ENCODE measurements at regions of chr19 and their contacts with region 1.

Region 1: DNA sequence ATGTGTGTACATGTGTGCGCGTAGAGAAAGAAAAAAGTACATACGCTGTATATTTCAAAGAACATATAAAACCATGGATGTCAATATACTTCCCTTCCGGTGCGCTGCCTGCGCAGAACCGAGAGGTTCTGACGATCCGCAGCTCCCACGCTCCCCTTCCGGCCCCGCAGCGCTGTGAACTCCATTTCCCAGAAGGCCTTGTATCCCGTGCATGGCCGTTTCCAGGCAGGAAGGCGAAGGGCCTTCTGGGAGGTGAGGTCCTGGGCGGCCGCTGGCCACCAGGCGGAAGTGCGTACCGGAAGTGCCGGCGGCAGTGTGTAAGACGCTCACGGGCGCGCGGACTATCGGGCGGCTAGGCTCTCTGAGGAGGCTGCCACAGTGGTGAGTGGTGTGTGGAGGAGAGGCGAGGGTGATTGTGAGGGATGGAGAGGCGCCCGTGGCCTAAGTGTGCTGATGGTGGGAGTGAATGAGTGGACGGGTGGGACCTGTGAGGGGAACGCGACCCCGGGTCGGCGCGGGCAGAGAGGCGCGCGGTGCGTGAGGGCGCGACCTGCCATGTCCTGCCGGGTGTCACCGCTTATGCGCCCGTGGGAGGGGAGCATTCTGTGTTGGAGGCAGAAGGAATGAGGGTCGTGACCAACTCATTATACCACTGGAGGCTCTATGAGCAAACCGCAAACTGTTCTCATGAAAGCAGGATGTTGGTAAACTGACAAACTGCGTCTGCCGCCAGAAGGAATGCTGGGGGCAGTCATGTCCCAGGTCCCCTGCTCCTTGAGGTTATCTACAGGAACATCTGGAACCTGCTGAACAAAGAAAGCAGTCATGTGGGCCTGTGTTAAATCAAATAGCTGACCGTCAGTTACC is at the start of gene ERVK3-1:
- DNase-seq: peak; percentile 97
- H3K4me3 Mint-ChIP-seq: peak within 1 kb of the TSS; percentile 89
- H3K27ac Mint-ChIP-seq: peak within 1 kb of the TSS; percentile 92
- H3K4me1 Mint-ChIP-seq: peaks cover 42% of the 10 kb centered on the region
- H3K27me3 Mint-ChIP-seq: no peaks in the 10 kb centered on the region
- total RNA-seq, gene ERVK3-1: 37.1 to 42.3 TPM

Region 2: DNA sequence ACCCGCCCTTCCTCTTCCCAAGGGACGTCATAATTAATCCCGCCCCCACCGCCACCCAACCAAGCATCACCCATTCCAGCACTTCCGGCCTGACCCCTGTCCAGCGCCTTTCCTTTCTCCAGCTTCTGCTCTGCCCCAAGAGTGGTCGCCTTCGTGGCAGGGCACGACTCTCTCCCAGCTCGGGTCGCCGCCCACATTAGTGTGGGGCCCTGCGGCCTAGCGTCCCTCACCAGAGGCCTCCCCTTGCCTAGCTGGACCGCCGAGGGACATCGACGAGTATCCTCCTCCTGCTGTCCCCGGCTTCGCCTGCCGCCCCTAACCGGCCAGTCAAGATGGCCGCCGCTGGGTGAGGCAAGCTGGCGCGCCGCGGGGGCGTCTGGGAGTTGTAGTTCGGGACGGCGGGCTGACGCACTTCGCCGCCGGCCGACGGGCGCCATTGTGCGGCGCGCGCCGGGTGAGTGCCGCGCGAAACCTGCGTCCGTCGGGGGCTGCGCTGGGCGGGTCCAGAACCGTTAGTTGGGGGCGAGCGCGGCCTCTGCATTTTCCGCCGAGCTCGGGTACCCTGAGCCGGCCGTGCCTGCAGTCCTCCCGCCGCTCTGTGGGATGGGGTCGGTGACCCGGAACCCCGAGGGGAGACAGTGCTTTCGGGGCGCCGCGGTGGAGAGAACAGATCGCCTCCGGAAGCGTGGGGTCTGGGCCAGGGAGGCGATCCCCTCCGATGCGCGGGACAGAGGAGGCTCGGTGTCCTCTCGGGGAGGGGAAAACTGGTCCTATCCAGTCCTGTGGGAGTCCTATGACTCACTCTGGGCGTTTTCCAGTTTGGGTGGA is 122.1 kb before region 1 on chr19 and contains the start of gene ZNF274:
- CTCF ChIA-PET with region 1: no interaction called
- POLR2A ChIA-PET with region 1: no interaction called
- intact Hi-C with region 1: loop called (anchors 1 kb)
- DNase-seq: peak; percentile 95
- H3K4me3 Mint-ChIP-seq: peak within 1 kb of the TSS; percentile 92
- H3K27ac Mint-ChIP-seq: peak within 1 kb of the TSS; percentile 99
- H3K4me1 Mint-ChIP-seq: peaks cover 16% of the 10 kb centered on the region
- H3K27me3 Mint-ChIP-seq: no peaks in the 10 kb centered on the region
- total RNA-seq, gene ZNF274: 19.1 to 19.6 TPM

Region 3: GRCh38 chr19:58203814-58204475 is 101.4 kb before region 1 on chr19:
- CTCF ChIA-PET with region 1: no interaction called
- POLR2A ChIA-PET with region 1: no interaction called
- intact Hi-C with region 1: no loop called
- DNase-seq: no peak
- H3K4me3 Mint-ChIP-seq: no peak overlapping the region
- H3K27ac Mint-ChIP-seq: no peak overlapping the region
- H3K4me1 Mint-ChIP-seq: no peaks in the 10 kb centered on the region
- H3K27me3 Mint-ChIP-seq: no peaks in the 10 kb centered on the region

Region 4: DNA sequence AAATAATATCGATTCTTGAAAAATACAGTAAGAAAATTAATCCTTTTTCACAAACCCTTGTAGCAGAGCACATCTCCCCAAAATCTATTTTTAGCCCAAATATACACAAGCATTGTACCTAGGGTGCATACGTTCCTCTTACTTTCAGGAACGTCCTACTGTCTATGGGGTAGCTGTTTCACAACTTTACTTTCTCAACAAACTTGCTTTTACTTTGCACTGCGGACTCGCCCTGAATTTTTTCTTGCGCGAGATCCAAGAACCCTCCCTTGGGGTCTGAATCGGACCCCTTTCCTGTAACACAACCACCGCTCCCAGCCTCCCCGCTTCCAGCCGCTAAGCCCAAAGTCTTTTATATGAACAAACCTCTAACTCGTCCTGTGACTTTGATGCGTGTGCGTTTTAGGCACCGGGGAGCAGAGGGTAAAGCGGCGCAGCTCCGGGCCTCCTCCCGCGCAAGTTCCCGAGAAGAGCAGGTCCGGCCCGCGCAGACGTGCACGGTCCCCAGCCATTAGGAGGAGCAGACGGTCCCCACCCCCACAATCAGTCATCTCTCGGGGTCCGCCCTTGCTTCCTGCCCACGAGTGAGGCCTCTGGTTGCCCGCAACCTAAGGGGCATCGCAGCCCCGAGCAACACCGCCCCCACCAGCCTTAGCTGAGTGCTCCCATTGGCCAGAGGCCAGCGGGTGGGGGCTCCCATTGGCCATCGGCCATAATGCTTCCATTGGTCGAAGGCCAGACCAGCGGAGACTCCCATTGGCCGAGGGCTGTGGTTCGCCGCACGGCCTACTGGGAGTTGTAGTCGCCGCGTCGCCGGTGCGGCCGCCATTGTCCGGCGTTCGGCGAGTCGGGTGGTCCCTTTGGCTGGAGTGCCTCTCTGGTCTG is 26.9 kb before region 1 on chr19 and contains the start of gene ZNF8:
- CTCF ChIA-PET with region 1: interaction called, 3 read pairs
- POLR2A ChIA-PET with region 1: no interaction called
- intact Hi-C with region 1: loop called (anchors 1 kb)
- DNase-seq: peak; percentile 99
- H3K4me3 Mint-ChIP-seq: peak within 1 kb of the TSS; percentile 83
- H3K27ac Mint-ChIP-seq: peak within 1 kb of the TSS; percentile 95
- H3K4me1 Mint-ChIP-seq: peaks cover 35% of the 10 kb centered on the region
- H3K27me3 Mint-ChIP-seq: no peaks in the 10 kb centered on the region
- total RNA-seq, gene ZNF8: 3.7 to 3.9 TPM

Region 5: GRCh38 chr19:58294743-58295374 is 10.4 kb before region 1 on chr19:
- CTCF ChIA-PET with region 1: no interaction called
- POLR2A ChIA-PET with region 1: no interaction called
- intact Hi-C with region 1: no loop called
- DNase-seq: no peak
- H3K4me3 Mint-ChIP-seq: no peak overlapping the region
- H3K27ac Mint-ChIP-seq: no peak overlapping the region
- H3K4me1 Mint-ChIP-seq: no peaks in the 10 kb centered on the region
- H3K27me3 Mint-ChIP-seq: no peaks in the 10 kb centered on the region

Region 6: GRCh38 chr19:58362272-58362994 is 57.1 kb after region 1 on chr19 and contains the start of gene ZNF497:
- CTCF ChIA-PET with region 1: no interaction called
- POLR2A ChIA-PET with region 1: interaction called, 6 read pairs
- intact Hi-C with region 1: loop called (anchors 1 kb)
- DNase-seq: peak; percentile 98
- H3K4me3 Mint-ChIP-seq: peak within 1 kb of the TSS; percentile 94
- H3K27ac Mint-ChIP-seq: peak within 1 kb of the TSS; percentile 89
- H3K4me1 Mint-ChIP-seq: peaks cover 8% of the 10 kb centered on the region
- H3K27me3 Mint-ChIP-seq: no peaks in the 10 kb centered on the region
- total RNA-seq, gene ZNF497: 0.31 to 0.93 TPM

Region 7: DNA sequence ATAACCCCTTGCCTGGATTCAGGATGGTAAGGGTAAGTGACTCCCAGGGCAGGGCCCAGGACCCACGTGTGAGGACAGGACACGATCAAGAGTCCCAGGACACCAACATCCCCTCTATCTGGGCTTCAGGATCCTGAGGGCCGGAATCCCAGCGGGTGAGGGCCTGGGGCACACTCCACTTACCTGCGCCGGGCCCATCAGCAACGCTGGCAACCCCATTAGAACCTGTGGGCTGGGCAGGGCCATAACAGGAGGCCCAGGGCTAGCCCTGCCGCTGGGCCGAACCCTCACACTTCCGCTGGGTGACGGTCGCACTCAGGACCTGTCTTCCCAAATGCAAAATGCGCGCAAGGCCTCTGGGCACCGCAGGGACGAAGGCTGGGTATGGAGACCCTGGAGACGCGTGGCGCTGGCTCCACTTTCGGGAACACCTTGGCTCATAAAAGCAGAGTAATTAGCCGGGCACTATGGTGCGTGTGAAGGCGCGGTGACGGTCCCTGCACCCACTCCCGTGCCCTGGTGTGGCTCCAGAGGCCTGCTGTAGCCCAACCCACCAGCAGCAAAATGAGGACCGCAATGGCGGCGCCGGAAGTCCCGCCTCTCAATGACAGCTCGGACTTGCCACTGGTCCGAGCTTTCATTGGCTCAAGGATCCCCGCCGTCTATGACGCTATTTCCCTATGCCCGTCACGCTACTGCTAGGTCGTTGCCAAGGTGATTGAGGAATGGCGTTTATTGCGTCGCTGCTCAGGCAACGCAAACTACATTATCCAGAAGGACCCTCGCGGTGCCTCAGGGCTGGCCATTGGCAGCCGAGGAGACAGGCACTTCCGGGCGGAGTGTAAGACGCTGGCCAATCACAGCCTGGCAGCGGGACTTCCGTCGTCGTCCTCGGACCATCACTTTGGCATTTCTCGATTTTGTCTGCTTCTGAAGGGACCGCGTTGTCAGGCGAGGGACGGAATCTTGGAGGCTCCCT is 134.6 kb after region 1 on chr19 and contains the start of gene ZNF132:
- CTCF ChIA-PET with region 1: interaction called, 3 read pairs
- POLR2A ChIA-PET with region 1: no interaction called
- intact Hi-C with region 1: loop called (anchors 1 kb)
- DNase-seq: peak; percentile 97
- H3K4me3 Mint-ChIP-seq: peak within 1 kb of the TSS; percentile 84
- H3K27ac Mint-ChIP-seq: peak within 1 kb of the TSS; percentile 71
- H3K4me1 Mint-ChIP-seq: peaks cover 25% of the 10 kb centered on the region
- H3K27me3 Mint-ChIP-seq: no peaks in the 10 kb centered on the region
- total RNA-seq, gene ZNF132: 3.1 to 3.6 TPM

Region 8: DNA sequence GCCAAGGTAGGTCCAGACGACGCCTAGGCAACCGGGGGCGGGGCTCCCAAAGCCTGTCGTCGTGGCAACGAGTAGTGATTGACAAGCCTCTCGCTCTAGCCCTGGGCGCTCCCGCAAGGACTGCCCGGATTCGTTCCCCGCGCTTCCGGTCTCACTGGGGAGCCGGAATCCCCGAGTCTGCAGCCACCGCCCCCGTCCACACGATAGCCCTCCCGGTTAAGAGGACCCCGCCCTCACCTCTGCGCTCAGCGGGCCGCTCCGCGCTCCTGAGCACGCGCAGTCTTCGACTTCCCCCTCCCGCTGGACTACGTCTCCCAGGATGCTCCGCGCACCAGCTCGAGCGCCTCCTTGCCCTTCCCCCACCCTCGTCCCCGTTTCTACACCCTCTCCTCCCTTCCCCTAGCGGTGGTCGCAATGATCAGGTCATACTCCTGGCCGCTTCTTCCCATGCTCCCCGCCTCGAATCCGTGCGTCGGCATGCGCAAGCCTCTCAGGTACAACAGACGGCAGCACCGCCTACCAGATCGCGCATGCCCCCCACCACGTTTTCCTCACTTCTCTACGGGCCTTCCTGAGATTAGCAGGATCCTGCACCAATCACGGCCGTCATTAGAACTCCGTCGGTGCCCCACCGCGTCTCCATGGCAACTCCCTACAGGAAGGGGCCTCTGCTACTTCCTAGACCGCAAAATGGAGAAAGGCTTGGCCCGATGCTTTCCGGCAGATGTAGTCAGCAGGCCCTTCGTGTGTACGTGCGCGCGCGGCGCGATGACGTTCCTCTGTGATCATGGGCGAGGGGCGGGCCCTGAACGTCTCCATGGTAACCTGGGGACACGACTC is 267.7 kb after region 1 on chr19 and contains the start of gene MZF1:
- CTCF ChIA-PET with region 1: no interaction called
- POLR2A ChIA-PET with region 1: no interaction called
- intact Hi-C with region 1: loop called (anchors 1 kb)
- DNase-seq: peak; percentile 100
- H3K4me3 Mint-ChIP-seq: peak within 1 kb of the TSS; percentile 96
- H3K27ac Mint-ChIP-seq: peak within 1 kb of the TSS; percentile 100
- H3K4me1 Mint-ChIP-seq: peaks cover 33% of the 10 kb centered on the region
- H3K27me3 Mint-ChIP-seq: no peaks in the 10 kb centered on the region
- total RNA-seq, gene MZF1: 13.3 to 14.4 TPM